A673 (cell line): ENCODE measurements at regions of chr9 and their contacts with region 1.

Region 1: GRCh38 chr9:111525056-111525977 is at the start of gene ZNF483:
- DNase-seq: peak; percentile 84
- H3K4me3 ChIP-seq: peak within 1 kb of the TSS; percentile 57
- H3K27ac ChIP-seq: no peak within 1 kb of the TSS
- H3K4me1 ChIP-seq: peaks cover 17% of the 10 kb centered on the region
- H3K27me3 ChIP-seq: peaks cover 4% of the 10 kb centered on the region
- CTCF ChIP-seq: no peak
- total RNA-seq, gene ZNF483: 3.4 and 4.4 TPM in 2 replicates

Region 2: GRCh38 chr9:111588846-111589245 is 63.5 kb after region 1 on chr9:
- CTCF ChIA-PET with region 1: no interaction called
- POLR2A ChIA-PET with region 1: interaction called, 13 read pairs
- intact Hi-C with region 1: no loop called
- DNase-seq: no peak
- H3K4me3 ChIP-seq: no peak overlapping the region
- H3K27ac ChIP-seq: no peak overlapping the region
- H3K4me1 ChIP-seq: no peaks in the 10 kb centered on the region
- H3K27me3 ChIP-seq: no peaks in the 10 kb centered on the region
- CTCF ChIP-seq: no peak

Region 3: DNA sequence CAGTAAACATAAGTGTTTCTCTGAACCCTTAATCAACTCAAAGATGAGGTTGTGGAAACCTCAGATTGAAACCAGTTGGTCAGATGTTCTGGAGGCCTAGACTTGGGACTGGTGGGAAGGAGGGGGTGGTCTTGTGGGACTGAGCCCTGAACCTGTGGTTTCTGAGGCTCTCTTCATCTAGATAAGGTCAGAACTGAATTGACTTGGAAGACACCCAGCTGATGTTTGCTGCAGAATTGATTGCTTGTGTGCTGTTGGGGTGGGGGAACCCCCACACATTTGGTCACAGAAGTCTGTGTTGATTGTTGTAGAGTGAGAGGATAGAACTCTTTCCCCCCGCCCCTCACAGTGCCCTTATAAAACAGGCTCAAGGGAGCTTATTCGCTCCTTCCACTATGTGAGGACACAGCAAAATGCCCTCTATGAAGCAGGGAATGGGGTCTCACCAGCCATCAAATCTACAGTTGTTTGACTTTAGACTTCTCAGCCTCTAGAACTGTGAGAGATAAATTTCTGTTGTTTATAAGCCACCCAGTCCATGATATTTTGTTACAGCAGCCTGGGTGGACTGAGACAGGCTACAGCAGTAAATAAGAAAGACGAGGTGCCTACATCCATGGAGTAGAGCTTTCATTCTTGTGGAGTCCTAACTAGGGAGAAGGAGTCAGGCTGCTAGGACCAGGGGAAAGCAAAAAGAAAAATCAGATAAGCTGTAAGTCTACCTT is 345.6 kb after region 1 on chr9:
- CTCF ChIA-PET with region 1: no interaction called
- POLR2A ChIA-PET with region 1: no interaction called
- intact Hi-C with region 1: no loop called
- DNase-seq: no peak
- H3K4me3 ChIP-seq: no peak overlapping the region
- H3K27ac ChIP-seq: no peak overlapping the region
- H3K4me1 ChIP-seq: peaks cover 9% of the 10 kb centered on the region
- H3K27me3 ChIP-seq: no peaks in the 10 kb centered on the region
- CTCF ChIP-seq: no peak

Region 4: GRCh38 chr9:113331780-113332179 is 1806.5 kb after region 1 on chr9:
- CTCF ChIA-PET with region 1: no interaction called
- POLR2A ChIA-PET with region 1: no interaction called
- intact Hi-C with region 1: no loop called
- DNase-seq: no peak
- H3K4me3 ChIP-seq: no peak overlapping the region
- H3K27ac ChIP-seq: no peak overlapping the region
- H3K4me1 ChIP-seq: no peaks in the 10 kb centered on the region
- H3K27me3 ChIP-seq: no peaks in the 10 kb centered on the region
- CTCF ChIP-seq: no peak